ENCODE measurements at regions of chr22 and their contacts with region 1.

Region 1: GRCh38 chr22:35928285-35928798 is 100.3 kb downstream of the RBFOX2 start:
- DNase-seq: peak in 1 of 2 donors; percentile 14
- H3K4me3 ChIP-seq: no peak overlapping the region
- H3K27ac ChIP-seq: peak overlapping the region in 1 of 3 donors; percentile 4
- H3K4me1 ChIP-seq: peaks cover 0 to 11% of the 10 kb centered on the region in 2 donors
- H3K27me3 ChIP-seq: no peaks in the 10 kb centered on the region
- CTCF ChIP-seq: no peak
- POLR2A ChIP-seq: no peak

Region 2: GRCh38 chr22:36117053-36117554 is 188.8 kb after region 1 on chr22:
- intact Hi-C with region 1: no loop called
- DNase-seq: peak; percentile 95 to 97
- H3K4me3 ChIP-seq: no peak overlapping the region
- H3K27ac ChIP-seq: peak overlapping the region; percentile 80 to 84 (median 84)
- H3K4me1 ChIP-seq: peaks cover 3 to 14% of the 10 kb centered on the region in 2 donors
- H3K27me3 ChIP-seq: no peaks in the 10 kb centered on the region
- CTCF ChIP-seq: peak in 1 of 6 experiments; percentile 4
- POLR2A ChIP-seq: peak in 1 of 2 donors; percentile 20

Region 3: GRCh38 chr22:36129486-36130388 is 201.4 kb after region 1 on chr22:
- intact Hi-C with region 1: loop called (anchors 5 kb)
- DNase-seq: no peak
- H3K4me3 ChIP-seq: no peak overlapping the region
- H3K27ac ChIP-seq: no peak overlapping the region
- H3K4me1 ChIP-seq: no peaks in the 10 kb centered on the region
- H3K27me3 ChIP-seq: no peaks in the 10 kb centered on the region
- CTCF ChIP-seq: no peak
- POLR2A ChIP-seq: no peak

Measured in thyroid gland (tissue), 4 donors.